ENCODE measurements at regions of chr1 and their contacts with region 1.

Region 1: GRCh38 chr1:28248283-28249012 is 10.9 kb upstream of the SESN2 start:
- DNase-seq: peak; percentile 64
- H3K4me3 ChIP-seq: peak overlapping the region; percentile 24
- H3K27ac ChIP-seq: peak overlapping the region; percentile 76
- H3K27me3 ChIP-seq: no peaks in the 10 kb centered on the region
- CTCF ChIP-seq: peak; percentile 94

Region 2: GRCh38 chr1:28190337-28190979 is 58.0 kb before region 1 on chr1:
- CTCF ChIA-PET with region 1: no interaction called
- POLR2A ChIA-PET with region 1: no interaction called
- DNase-seq: no peak
- H3K4me3 ChIP-seq: no peak overlapping the region
- H3K27ac ChIP-seq: peak overlapping the region; percentile 55
- H3K27me3 ChIP-seq: no peaks in the 10 kb centered on the region
- CTCF ChIP-seq: no peak

Region 3: GRCh38 chr1:28235755-28236655 is 12.4 kb before region 1 on chr1 and contains the start of gene ATP5IF1:
- CTCF ChIA-PET with region 1: interaction called, 30 read pairs
- POLR2A ChIA-PET with region 1: interaction called, 13 read pairs
- DNase-seq: peak; percentile 96
- H3K4me3 ChIP-seq: peak within 1 kb of the TSS; percentile 100
- H3K27ac ChIP-seq: peak within 1 kb of the TSS; percentile 65
- H3K27me3 ChIP-seq: no peaks in the 10 kb centered on the region
- CTCF ChIP-seq: no peak
- polyA plus RNA-seq, gene ATP5IF1: 151 and 189 TPM in 2 replicates

Region 4: GRCh38 chr1:28266920-28267322 is 18.5 kb after region 1 on chr1:
- CTCF ChIA-PET with region 1: interaction called, 69 read pairs
- POLR2A ChIA-PET with region 1: interaction called, 46 read pairs
- DNase-seq: no peak
- H3K4me3 ChIP-seq: no peak overlapping the region
- H3K27ac ChIP-seq: no peak overlapping the region
- H3K27me3 ChIP-seq: no peaks in the 10 kb centered on the region
- CTCF ChIP-seq: no peak

Region 5: GRCh38 chr1:28354121-28354520 is 105.7 kb after region 1 on chr1:
- CTCF ChIA-PET with region 1: interaction called, 17 read pairs
- POLR2A ChIA-PET with region 1: no interaction called
- DNase-seq: no peak
- H3K4me3 ChIP-seq: no peak overlapping the region
- H3K27ac ChIP-seq: peak overlapping the region; percentile 58
- H3K27me3 ChIP-seq: no peaks in the 10 kb centered on the region
- CTCF ChIP-seq: no peak

Region 6: GRCh38 chr1:28369371-28370238 is 121.2 kb after region 1 on chr1 and contains the start of gene PHACTR4:
- CTCF ChIA-PET with region 1: interaction called, 11 read pairs
- POLR2A ChIA-PET with region 1: interaction called, 8 read pairs
- DNase-seq: peak; percentile 82
- H3K4me3 ChIP-seq: peak within 1 kb of the TSS; percentile 85
- H3K27ac ChIP-seq: peak within 1 kb of the TSS; percentile 87
- H3K27me3 ChIP-seq: no peaks in the 10 kb centered on the region
- CTCF ChIP-seq: no peak
- polyA plus RNA-seq, gene PHACTR4: 12.3 and 15.2 TPM in 2 replicates

Region 7: DNA sequence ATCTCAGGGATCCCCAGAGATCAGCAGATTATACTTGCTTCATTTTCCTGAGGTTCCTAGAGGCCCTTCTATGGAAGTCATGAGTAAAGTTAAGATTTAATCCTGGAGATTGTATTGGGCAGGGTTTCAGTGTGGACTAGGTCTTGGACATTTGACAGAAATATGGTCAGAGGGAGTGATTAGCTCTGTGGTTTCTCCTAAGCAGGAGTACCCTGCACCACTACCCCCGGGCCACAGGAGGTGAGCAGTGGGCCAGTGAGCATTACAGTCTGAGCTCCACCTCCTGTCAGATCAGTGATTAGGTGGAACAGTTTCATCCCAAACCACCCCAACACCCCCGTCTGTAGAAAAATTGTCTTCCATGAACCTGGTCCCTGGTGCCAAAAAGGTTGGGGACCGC is 164.3 kb after region 1 on chr1:
- CTCF ChIA-PET with region 1: interaction called, 14 read pairs
- POLR2A ChIA-PET with region 1: no interaction called
- DNase-seq: no peak
- H3K4me3 ChIP-seq: no peak overlapping the region
- H3K27ac ChIP-seq: no peak overlapping the region
- H3K27me3 ChIP-seq: no peaks in the 10 kb centered on the region
- CTCF ChIP-seq: no peak